ENCODE measurements at regions of chr1 and their contacts with region 1.

Region 1: DNA sequence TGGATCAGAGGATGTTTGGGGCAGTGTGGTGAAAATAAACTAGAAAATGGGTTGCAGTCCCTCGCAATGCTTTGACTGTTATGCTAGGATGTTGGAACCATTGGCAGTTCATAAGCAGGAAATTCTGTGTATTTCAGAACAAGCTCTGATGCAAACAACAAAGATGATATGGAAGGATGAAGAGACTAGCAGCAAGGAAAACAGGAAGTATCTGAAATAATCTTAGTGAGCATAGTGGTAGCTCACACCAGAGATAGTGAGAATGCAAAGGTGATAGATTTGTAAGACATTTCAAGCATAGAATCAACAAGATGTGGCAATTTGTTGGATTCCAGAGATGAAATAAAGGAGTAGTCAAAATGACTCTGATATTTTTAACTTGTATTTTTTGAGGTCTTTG is 11.1 kb upstream of the RCC1 start:
- DNase-seq: no peak
- ATAC-seq: no peak
- H3K4me3 ChIP-seq: no peak overlapping the region
- H3K27ac ChIP-seq: no peak overlapping the region
- H3K4me1 ChIP-seq: no peaks in the 10 kb centered on the region
- H3K27me3 ChIP-seq: no peaks in the 10 kb centered on the region
- CTCF ChIP-seq: no peak
- EP300 ChIP-seq: no peak
- POLR2A ChIP-seq: no peak
- RAD21 ChIP-seq: no peak

Region 2: DNA sequence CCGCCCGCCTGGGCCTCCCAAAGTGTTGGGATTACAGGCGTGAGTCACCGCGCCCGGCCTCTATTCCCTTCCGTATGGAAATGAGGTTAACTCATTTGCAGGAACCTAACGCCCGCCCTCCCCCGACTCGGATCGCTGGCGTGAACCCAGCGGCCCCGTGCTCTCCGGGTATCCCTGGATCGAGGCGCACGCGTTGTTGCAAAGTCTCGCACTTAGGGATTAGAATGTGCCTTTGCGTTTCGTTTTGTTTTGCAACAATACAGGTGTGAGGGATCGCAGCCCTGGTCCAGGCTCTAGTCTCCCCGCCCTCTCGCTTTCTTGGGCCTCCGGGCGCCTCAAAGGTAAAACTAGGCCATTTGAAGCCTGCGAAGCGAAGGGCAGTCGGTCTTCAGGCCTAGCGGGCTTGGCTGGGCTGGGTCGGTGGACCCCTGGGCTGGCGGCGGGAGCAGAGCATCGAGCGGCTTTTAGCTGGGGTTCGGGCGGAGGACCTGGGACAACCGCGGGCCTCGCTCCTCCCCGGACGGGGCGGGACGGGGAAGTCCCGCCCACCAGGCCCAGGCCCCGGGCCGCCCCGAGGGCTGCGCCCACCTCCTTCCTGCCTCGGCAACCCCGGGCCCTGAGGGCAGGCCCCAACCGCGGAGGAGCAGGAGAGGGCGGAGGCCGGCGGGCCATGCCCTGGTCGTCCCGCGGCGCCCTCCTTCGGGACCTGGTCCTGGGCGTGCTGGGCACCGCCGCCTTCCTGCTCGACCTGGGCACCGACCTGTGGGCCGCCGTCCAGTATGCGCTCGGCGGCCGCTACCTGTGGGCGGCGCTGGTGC is 535.1 kb before region 1 on chr1 and contains the start of gene XKR8:
- CTCF ChIA-PET with region 1: no interaction called
- POLR2A ChIA-PET with region 1: no interaction called
- RAD21 ChIA-PET with region 1: no interaction called
- SMC1A ChIA-PET with region 1: no interaction called
- in situ Hi-C with region 1: no loop called
- intact Hi-C with region 1: loop called (anchors 10 kb)
- DNase-seq: peak; percentile 31
- ATAC-seq: peak; percentile 98
- H3K4me3 ChIP-seq: peak within 1 kb of the TSS; percentile 82
- H3K27ac ChIP-seq: 0 out of 2 replicates have a peak within 1 kb of the TSS, but pooled peaks have one; percentile 31
- H3K4me1 ChIP-seq: peaks cover 4% of the 10 kb centered on the region
- H3K27me3 ChIP-seq: no peaks in the 10 kb centered on the region
- CTCF ChIP-seq: peak; percentile 44 to 48 (median 47); a peak in 3 of 6 replicates
- EP300 ChIP-seq: no peak
- POLR2A ChIP-seq: peak; percentile 82
- RAD21 ChIP-seq: no peak
- polyA plus RNA-seq, gene XKR8: 0.80 to 1.1 TPM

Region 3: DNA sequence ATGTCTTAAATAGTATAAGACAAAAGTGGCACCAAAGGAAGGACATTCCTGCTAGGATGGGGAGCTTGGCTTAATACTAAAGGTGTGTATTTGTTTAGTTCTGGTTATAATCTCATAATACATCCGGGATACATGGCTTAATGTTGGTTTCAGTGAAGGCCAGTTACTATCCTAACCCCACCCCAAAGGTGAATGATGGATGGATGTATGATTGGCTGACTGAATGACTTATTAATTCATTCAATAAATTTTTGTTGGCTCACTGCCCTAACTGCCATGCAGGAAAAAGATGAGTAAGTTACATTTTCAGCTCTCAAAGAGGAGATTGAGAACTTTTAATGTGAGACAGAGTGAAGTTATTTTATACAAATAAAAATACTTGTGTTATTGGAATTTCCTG is 73.0 kb before region 1 on chr1:
- CTCF ChIA-PET with region 1: no interaction called
- POLR2A ChIA-PET with region 1: no interaction called
- RAD21 ChIA-PET with region 1: no interaction called
- SMC1A ChIA-PET with region 1: no interaction called
- in situ Hi-C with region 1: no loop called
- intact Hi-C with region 1: no loop called
- DNase-seq: no peak
- ATAC-seq: no peak
- H3K4me3 ChIP-seq: no peak overlapping the region
- H3K27ac ChIP-seq: no peak overlapping the region
- H3K4me1 ChIP-seq: peaks cover 7% of the 10 kb centered on the region
- H3K27me3 ChIP-seq: no peaks in the 10 kb centered on the region
- CTCF ChIP-seq: no peak
- EP300 ChIP-seq: no peak
- POLR2A ChIP-seq: no peak
- RAD21 ChIP-seq: no peak

Region 4: DNA sequence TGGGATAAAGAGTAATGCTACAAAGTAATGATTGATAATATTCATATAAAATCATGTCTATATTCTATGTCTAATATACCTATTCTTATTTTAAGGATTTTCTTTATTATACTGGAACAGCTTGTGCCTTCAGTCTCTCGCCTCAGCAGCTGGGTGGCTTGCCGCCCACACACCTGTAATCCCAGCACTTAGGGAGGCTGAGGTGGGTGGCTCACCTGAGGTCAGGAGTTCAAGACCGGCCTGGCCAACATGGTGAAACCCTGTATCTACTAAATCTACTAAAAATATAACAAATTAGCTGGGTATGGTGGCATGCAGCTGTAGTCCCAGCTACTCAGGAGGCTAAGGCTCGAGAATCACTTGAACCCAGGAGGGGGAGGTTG is 50.5 kb after region 1 on chr1:
- CTCF ChIA-PET with region 1: no interaction called
- POLR2A ChIA-PET with region 1: no interaction called
- RAD21 ChIA-PET with region 1: no interaction called
- SMC1A ChIA-PET with region 1: no interaction called
- in situ Hi-C with region 1: no loop called
- intact Hi-C with region 1: no loop called
- DNase-seq: no peak
- ATAC-seq: no peak
- H3K4me3 ChIP-seq: no peak overlapping the region
- H3K27ac ChIP-seq: no peak overlapping the region
- H3K4me1 ChIP-seq: no peaks in the 10 kb centered on the region
- H3K27me3 ChIP-seq: no peaks in the 10 kb centered on the region
- CTCF ChIP-seq: no peak
- EP300 ChIP-seq: no peak
- POLR2A ChIP-seq: no peak
- RAD21 ChIP-seq: no peak

Region 5: DNA sequence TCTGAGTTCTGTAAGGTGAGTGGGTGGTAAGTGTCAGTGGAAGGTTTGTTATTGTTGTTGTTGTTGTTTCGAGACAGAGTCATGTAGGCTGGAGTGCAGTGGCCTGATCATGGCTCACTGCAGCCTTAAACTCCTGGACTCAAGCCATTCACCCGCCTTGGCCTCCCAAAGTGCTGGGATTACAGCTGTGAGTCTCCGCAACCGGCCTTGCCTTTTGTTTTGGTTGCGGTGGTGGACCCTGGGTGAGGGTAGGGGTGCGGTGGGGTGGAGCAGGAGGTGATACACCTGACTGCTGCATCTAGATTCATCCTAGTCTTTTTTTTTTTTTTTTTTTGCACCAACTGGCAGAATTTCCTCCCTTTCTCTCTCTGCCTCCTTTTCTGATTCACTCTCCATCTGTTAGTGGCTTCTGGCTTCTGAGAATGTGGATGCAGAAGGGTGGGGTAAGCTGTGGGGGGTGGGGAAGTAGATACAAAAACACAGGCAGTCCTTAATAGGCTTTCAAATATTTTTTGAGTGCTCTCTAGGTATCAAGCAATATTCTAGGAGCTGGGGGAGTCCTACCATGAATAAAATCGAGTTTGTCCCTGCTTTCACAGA is 169.2 kb after region 1 on chr1:
- CTCF ChIA-PET with region 1: no interaction called
- POLR2A ChIA-PET with region 1: no interaction called
- RAD21 ChIA-PET with region 1: no interaction called
- SMC1A ChIA-PET with region 1: no interaction called
- in situ Hi-C with region 1: no loop called
- intact Hi-C with region 1: no loop called
- DNase-seq: no peak
- ATAC-seq: no peak
- H3K4me3 ChIP-seq: no peak overlapping the region
- H3K27ac ChIP-seq: no peak overlapping the region
- H3K4me1 ChIP-seq: no peaks in the 10 kb centered on the region
- H3K27me3 ChIP-seq: no peaks in the 10 kb centered on the region
- CTCF ChIP-seq: no peak
- EP300 ChIP-seq: no peak
- POLR2A ChIP-seq: no peak
- RAD21 ChIP-seq: no peak